ENCODE measurements at regions of chr21 and their contacts with region 1.

Region 1: GRCh38 chr21:38355992-38356797 is 99.4 kb downstream of the KCNJ15 start:
- DNase-seq: peak; percentile 28
- ATAC-seq: peak; percentile 96
- H3K4me3 ChIP-seq: no peak overlapping the region
- H3K27ac ChIP-seq: no peak overlapping the region
- H3K4me1 ChIP-seq: no peaks in the 10 kb centered on the region
- H3K27me3 ChIP-seq: no peaks in the 10 kb centered on the region
- CTCF ChIP-seq: peak; percentile 96
- EP300 ChIP-seq: no peak
- POLR2A ChIP-seq: no peak
- RAD21 ChIP-seq: peak; percentile 80

Region 2: GRCh38 chr21:37700641-37701202 is 655.5 kb before region 1 on chr21:
- CTCF ChIA-PET with region 1: no interaction called
- POLR2A ChIA-PET with region 1: no interaction called
- in situ Hi-C with region 1: loop called (anchors 25 kb)
- intact Hi-C with region 1: no loop called
- DNase-seq: peak; percentile 48
- ATAC-seq: peak; percentile 96
- H3K4me3 ChIP-seq: no peak overlapping the region
- H3K27ac ChIP-seq: no peak overlapping the region
- H3K4me1 ChIP-seq: no peaks in the 10 kb centered on the region
- H3K27me3 ChIP-seq: no peaks in the 10 kb centered on the region
- CTCF ChIP-seq: peak; percentile 59
- EP300 ChIP-seq: no peak
- POLR2A ChIP-seq: no peak
- RAD21 ChIP-seq: no peak

Region 3: DNA sequence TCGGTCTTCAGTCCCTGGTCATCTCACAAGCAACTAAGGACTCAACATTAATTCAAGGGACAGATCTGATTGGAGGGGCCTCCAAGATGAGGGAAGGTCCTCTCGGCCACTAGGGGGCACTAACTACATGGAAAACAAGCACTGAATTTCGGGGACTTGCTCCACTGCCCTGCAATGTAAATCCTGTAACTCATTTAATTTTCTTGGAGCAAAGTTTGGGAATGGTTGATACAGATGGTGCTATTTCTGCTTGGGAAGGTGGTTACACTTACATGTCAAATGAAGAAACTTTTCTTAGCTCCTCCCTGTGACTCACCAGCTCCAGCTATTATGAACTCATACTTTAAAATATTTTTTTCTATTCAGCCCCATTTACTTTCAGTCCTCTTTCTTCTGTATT is 196.8 kb before region 1 on chr21:
- CTCF ChIA-PET with region 1: interaction called, 16 read pairs
- POLR2A ChIA-PET with region 1: no interaction called
- in situ Hi-C with region 1: loop called (anchors 5 kb)
- intact Hi-C with region 1: loop called (anchors 1 kb)
- DNase-seq: peak; percentile 53
- ATAC-seq: peak; percentile 74
- H3K4me3 ChIP-seq: no peak overlapping the region
- H3K27ac ChIP-seq: no peak overlapping the region
- H3K4me1 ChIP-seq: no peaks in the 10 kb centered on the region
- H3K27me3 ChIP-seq: no peaks in the 10 kb centered on the region
- CTCF ChIP-seq: peak; percentile 69
- EP300 ChIP-seq: no peak
- POLR2A ChIP-seq: no peak
- RAD21 ChIP-seq: no peak

Region 4: DNA sequence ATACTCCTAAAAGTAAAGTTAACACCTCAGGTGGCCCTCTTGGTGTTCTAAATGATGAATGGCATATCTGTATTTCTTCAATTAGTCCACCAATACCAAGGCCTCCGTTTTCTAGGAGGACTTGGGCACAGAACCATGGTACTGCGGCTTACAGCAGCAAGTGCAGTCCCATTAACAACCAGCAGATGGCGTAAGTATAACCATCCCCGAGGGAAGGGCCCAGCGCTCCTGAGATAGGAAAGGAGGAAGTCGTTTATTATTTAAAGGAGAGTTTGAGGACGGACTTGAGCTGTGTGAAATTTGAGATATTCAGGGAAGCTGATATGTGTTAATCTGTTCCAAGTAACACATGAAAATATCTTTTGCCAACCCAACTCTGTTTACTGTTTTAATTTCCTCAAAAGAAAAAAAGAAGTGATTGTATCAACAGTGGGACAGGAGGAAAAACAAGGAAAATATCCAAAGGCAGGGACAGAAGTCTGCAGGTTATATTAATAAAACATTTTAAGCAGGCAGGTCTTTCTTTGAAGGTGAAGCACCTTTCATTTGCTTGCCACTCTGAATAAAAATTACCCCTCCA is 137.1 kb before region 1 on chr21:
- CTCF ChIA-PET with region 1: interaction called, 42 read pairs
- POLR2A ChIA-PET with region 1: no interaction called
- in situ Hi-C with region 1: loop called (anchors 5 kb)
- intact Hi-C with region 1: loop called (anchors 1 kb)
- DNase-seq: peak; percentile 48
- ATAC-seq: peak; percentile 86
- H3K4me3 ChIP-seq: no peak overlapping the region
- H3K27ac ChIP-seq: no peak overlapping the region
- H3K4me1 ChIP-seq: no peaks in the 10 kb centered on the region
- H3K27me3 ChIP-seq: no peaks in the 10 kb centered on the region
- CTCF ChIP-seq: peak; percentile 79
- EP300 ChIP-seq: no peak
- POLR2A ChIP-seq: no peak
- RAD21 ChIP-seq: peak; percentile 56; the same call in 1 of the 2 replicates